ENCODE measurements at regions of chr19 and their contacts with region 1.

Region 1: DNA sequence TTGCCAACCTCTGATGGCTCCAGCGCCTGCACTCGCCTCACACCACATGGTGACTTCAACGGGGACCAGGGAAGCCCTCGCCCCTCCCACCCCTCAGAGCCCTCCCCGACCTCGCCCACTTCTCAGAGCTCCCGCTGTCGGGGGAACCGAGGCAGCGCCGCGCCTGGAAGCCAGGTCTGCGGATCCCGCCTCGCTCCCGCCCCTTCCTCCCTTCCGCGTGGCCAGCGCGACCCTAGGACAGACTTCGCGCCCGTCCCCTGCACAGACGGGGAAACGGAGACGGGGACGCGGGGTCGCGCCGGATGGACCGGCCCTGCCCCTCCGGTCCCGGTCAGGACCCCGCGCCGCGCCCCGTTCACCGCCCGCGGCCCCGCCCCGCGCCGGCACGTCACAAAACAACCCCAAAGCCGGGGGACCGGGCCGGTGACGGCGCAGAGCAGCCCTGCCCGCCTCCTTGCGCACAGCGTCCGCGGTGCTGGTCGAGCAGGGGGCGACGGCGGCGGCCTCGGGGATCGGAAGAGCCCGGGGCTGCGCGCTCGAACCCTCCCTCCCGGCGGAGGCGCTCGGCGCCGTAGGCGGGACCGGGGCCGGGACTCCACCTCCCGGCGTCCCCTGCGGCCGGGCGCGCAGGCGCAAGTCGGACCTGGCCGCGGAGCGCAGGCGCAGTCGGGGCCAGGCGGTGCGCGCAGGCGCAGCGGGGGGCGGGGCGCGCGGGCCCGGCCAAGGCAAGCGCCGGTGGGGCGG is 379 bp upstream of the CDC34 start:
- DNase-seq: peak; percentile 70 to 95 (median 88)
- ATAC-seq: peak; percentile 79
- H3K4me3 ChIP-seq: peak overlapping the region; percentile 72
- H3K4me3 Mint-ChIP-seq: peak overlapping the region; percentile 87
- H3K27ac ChIP-seq: peak overlapping the region; percentile 34 to 75
- H3K27ac Mint-ChIP-seq: peak overlapping the region; percentile 61
- H3K4me1 ChIP-seq: peaks cover 45% of the 10 kb centered on the region
- H3K4me1 Mint-ChIP-seq: peaks cover 9% of the 10 kb centered on the region
- H3K27me3 ChIP-seq: peaks cover 0 to 3% of the 10 kb centered on the region in 2 experiments
- H3K27me3 Mint-ChIP-seq: no peaks in the 10 kb centered on the region
- CTCF ChIP-seq: no peak

Region 2: GRCh38 chr19:518603-519231 is 12.5 kb before region 1 on chr19:
- CTCF ChIA-PET with region 1: interaction called, 5 read pairs
- POLR2A ChIA-PET with region 1: interaction called, 7 read pairs
- intact Hi-C with region 1: loop called in 1 of 2 experiments (anchors 1 kb)
- DNase-seq: peak; percentile 53 to 87 (median 67)
- ATAC-seq: peak; percentile 91
- H3K4me3 ChIP-seq: no peak overlapping the region
- H3K4me3 Mint-ChIP-seq: no peak overlapping the region
- H3K27ac ChIP-seq: peak overlapping the region in 1 of 2 donors; percentile 29
- H3K27ac Mint-ChIP-seq: no peak overlapping the region
- H3K4me1 ChIP-seq: peaks cover 31% of the 10 kb centered on the region
- H3K4me1 Mint-ChIP-seq: peaks cover 12% of the 10 kb centered on the region
- H3K27me3 ChIP-seq: no peaks in the 10 kb centered on the region
- H3K27me3 Mint-ChIP-seq: no peaks in the 10 kb centered on the region
- CTCF ChIP-seq: peak; percentile 17

Region 3: GRCh38 chr19:572140-572742 is 41.1 kb after region 1 on chr19 and contains the start of gene BSG:
- CTCF ChIA-PET with region 1: no interaction called
- POLR2A ChIA-PET with region 1: interaction called, 9 read pairs
- intact Hi-C with region 1: loop called (anchors 1 kb)
- DNase-seq: peak; percentile 97 to 100 (median 98)
- ATAC-seq: peak; percentile 83
- H3K4me3 ChIP-seq: peak within 1 kb of the TSS; percentile 94
- H3K4me3 Mint-ChIP-seq: peak within 1 kb of the TSS; percentile 99
- H3K27ac ChIP-seq: peak within 1 kb of the TSS; percentile 69 to 87
- H3K27ac Mint-ChIP-seq: peak within 1 kb of the TSS; percentile 95
- H3K4me1 ChIP-seq: peaks cover 60% of the 10 kb centered on the region
- H3K4me1 Mint-ChIP-seq: peaks cover 40% of the 10 kb centered on the region
- H3K27me3 ChIP-seq: no peaks in the 10 kb centered on the region
- H3K27me3 Mint-ChIP-seq: no peaks in the 10 kb centered on the region
- CTCF ChIP-seq: no peak
- total RNA-seq, gene BSG: 68.7 to 71.6 TPM

Measured in CD4-positive, alpha-beta T cell (primary cell).